Heart left ventricle (tissue), 16 donors: ENCODE measurements at regions of chr6 and their contacts with region 1.

Region 1: GRCh38 chr6:39980839-39981580 is 46.7 kb upstream of the MOCS1 start:
- DNase-seq: peak in 1 of 5 donors; percentile 18
- ATAC-seq: peak; percentile 59 to 82 (median 68)
- H3K4me3 ChIP-seq: no peak overlapping the region
- H3K27ac ChIP-seq: peak overlapping the region in 4 of 12 donors; percentile 19 to 59 (median 42)
- H3K4me1 ChIP-seq: peaks cover 0 to 34% (median 8%) of the 10 kb centered on the region in 12 donors
- H3K27me3 ChIP-seq: no peaks in the 10 kb centered on the region
- CTCF ChIP-seq: peak in 11 of 12 donors; percentile 20 to 59 (median 47)
- POLR2A ChIP-seq: no peak

Region 2: GRCh38 chr6:39892490-39893129 is 88.4 kb before region 1 on chr6:
- intact Hi-C with region 1: no loop called
- DNase-seq: peak in 4 of 5 donors; percentile 48 to 64 (median 61)
- ATAC-seq: peak; percentile 45 to 77 (median 70)
- H3K4me3 ChIP-seq: no peak overlapping the region
- H3K27ac ChIP-seq: no peak overlapping the region
- H3K4me1 ChIP-seq: peaks cover 0 to 26% (median 12%) of the 10 kb centered on the region in 12 donors
- H3K27me3 ChIP-seq: no peaks in the 10 kb centered on the region
- CTCF ChIP-seq: peak; percentile 53 to 75 (median 69)
- POLR2A ChIP-seq: no peak

Region 3: GRCh38 chr6:40587240-40588069 is 606.4 kb after region 1 on chr6 and contains the start of gene LRFN2:
- intact Hi-C with region 1: loop called in 2 of 10 experiments (anchors 5 to 10 kb)
- DNase-seq: peak; percentile 49 to 83 (median 61)
- ATAC-seq: peak; percentile 48 to 97 (median 89)
- H3K4me3 ChIP-seq: peak within 1 kb of the TSS in 11 of 12 donors; percentile 11 to 51 (median 40)
- H3K27ac ChIP-seq: no peak within 1 kb of the TSS
- H3K4me1 ChIP-seq: peaks cover 0 to 21% (median 7%) of the 10 kb centered on the region in 12 donors
- H3K27me3 ChIP-seq: peaks cover 7 to 94% (median 31%) of the 10 kb centered on the region in 9 donors
- CTCF ChIP-seq: peak in 11 of 12 donors; percentile 29 to 73 (median 60)
- POLR2A ChIP-seq: no peak
- total RNA-seq, gene LRFN2: not detected

Region 4: DNA sequence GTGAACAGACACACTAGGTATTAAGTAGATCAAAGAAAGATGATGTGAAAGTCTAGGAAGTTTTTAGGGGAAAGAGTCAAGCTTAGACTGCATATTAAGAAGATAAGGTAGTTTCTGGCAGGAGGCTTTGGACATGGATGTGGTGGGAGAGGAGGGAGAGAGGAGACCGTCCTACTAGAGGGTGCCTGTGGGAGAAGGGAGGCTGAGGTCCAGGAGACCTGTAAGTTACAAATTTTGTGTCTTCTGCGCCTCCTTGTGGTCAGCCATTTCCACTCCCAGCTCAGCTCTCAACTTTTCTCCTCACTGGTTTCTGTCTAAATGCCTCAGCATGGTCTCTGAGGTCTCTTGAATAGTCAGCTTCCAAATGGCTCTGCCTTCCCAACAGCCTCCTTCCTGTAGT is 864.5 kb after region 1 on chr6:
- intact Hi-C with region 1: loop called in 5 of 10 experiments (anchors 5 to 10 kb)
- DNase-seq: peak in 3 of 5 donors; percentile 19 to 36 (median 20)
- ATAC-seq: peak in 1 of 4 donors; percentile 50
- H3K4me3 ChIP-seq: no peak overlapping the region
- H3K27ac ChIP-seq: no peak overlapping the region
- H3K4me1 ChIP-seq: peaks cover 0 to 13% (median 0%) of the 10 kb centered on the region in 12 donors
- H3K27me3 ChIP-seq: peaks cover 0 to 14% (median 0%) of the 10 kb centered on the region in 9 donors
- CTCF ChIP-seq: peak; percentile 31 to 63 (median 46)
- POLR2A ChIP-seq: no peak

Region 5: GRCh38 chr6:41021832-41022231 is 1040.8 kb after region 1 on chr6:
- intact Hi-C with region 1: loop called in 4 of 10 experiments (anchors 2 to 10 kb)
- DNase-seq: peak in 2 of 5 donors; percentile 37 to 60
- ATAC-seq: peak; percentile 71 to 91 (median 78)
- H3K4me3 ChIP-seq: no peak overlapping the region
- H3K27ac ChIP-seq: no peak overlapping the region
- H3K4me1 ChIP-seq: peaks cover 0 to 12% (median 1%) of the 10 kb centered on the region in 12 donors
- H3K27me3 ChIP-seq: no peaks in the 10 kb centered on the region
- CTCF ChIP-seq: peak in 9 of 12 donors; percentile 16 to 52 (median 33)
- POLR2A ChIP-seq: no peak